AG04449 (cell line): ENCODE measurements at regions of chr6 and their contacts with region 1.

Region 1: GRCh38 chr6:31680840-31681671 is at the start of gene LY6G5C:
- DNase-seq: peak; percentile 64
- H3K4me3 ChIP-seq: peak within 1 kb of the TSS; percentile 58
- CTCF ChIP-seq: peak; percentile 78

Region 2: GRCh38 chr6:31479933-31480535 is 201.0 kb before region 1 on chr6:
- CTCF ChIA-PET with region 1: no interaction called
- POLR2A ChIA-PET with region 1: no interaction called
- DNase-seq: no peak
- H3K4me3 ChIP-seq: no peak overlapping the region
- CTCF ChIP-seq: no peak

Region 3: GRCh38 chr6:31615748-31616147 is 65.3 kb before region 1 on chr6:
- CTCF ChIA-PET with region 1: no interaction called
- POLR2A ChIA-PET with region 1: no interaction called
- DNase-seq: no peak
- H3K4me3 ChIP-seq: no peak overlapping the region
- CTCF ChIP-seq: no peak

Region 4: GRCh38 chr6:31739639-31740396 is 58.8 kb after region 1 on chr6 and contains the start of gene MSH5:
- CTCF ChIA-PET with region 1: interaction called, 12 read pairs
- POLR2A ChIA-PET with region 1: no interaction called
- DNase-seq: peak; percentile 91
- H3K4me3 ChIP-seq: peak within 1 kb of the TSS; percentile 95
- CTCF ChIP-seq: no peak

Region 5: DNA sequence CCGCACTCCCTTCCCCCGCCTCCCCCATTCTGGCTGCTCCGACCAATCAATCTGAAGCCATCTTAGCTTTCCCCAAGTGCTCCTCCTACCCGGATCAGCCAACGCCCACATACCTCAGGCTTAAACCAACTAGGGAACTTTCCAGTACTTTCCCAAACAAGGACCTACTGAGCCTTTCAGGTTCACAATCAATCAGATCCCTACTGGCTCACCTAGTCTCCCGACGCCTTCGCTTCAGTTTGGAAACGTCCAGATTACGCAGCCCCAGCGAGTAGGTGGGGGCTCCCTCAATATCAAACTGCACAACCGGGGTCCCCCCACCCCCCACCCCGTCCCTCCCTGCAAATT is 133.6 kb after region 1 on chr6:
- CTCF ChIA-PET with region 1: no interaction called
- POLR2A ChIA-PET with region 1: no interaction called
- DNase-seq: peak; percentile 92
- H3K4me3 ChIP-seq: peak overlapping the region; percentile 64
- CTCF ChIP-seq: no peak

Region 6: GRCh38 chr6:31862344-31863227 is 181.5 kb after region 1 on chr6 and contains the start of gene NEU1:
- CTCF ChIA-PET with region 1: interaction called, 22 read pairs
- POLR2A ChIA-PET with region 1: no interaction called
- DNase-seq: peak; percentile 99
- H3K4me3 ChIP-seq: peak within 1 kb of the TSS; percentile 94
- CTCF ChIP-seq: no peak

Region 7: DNA sequence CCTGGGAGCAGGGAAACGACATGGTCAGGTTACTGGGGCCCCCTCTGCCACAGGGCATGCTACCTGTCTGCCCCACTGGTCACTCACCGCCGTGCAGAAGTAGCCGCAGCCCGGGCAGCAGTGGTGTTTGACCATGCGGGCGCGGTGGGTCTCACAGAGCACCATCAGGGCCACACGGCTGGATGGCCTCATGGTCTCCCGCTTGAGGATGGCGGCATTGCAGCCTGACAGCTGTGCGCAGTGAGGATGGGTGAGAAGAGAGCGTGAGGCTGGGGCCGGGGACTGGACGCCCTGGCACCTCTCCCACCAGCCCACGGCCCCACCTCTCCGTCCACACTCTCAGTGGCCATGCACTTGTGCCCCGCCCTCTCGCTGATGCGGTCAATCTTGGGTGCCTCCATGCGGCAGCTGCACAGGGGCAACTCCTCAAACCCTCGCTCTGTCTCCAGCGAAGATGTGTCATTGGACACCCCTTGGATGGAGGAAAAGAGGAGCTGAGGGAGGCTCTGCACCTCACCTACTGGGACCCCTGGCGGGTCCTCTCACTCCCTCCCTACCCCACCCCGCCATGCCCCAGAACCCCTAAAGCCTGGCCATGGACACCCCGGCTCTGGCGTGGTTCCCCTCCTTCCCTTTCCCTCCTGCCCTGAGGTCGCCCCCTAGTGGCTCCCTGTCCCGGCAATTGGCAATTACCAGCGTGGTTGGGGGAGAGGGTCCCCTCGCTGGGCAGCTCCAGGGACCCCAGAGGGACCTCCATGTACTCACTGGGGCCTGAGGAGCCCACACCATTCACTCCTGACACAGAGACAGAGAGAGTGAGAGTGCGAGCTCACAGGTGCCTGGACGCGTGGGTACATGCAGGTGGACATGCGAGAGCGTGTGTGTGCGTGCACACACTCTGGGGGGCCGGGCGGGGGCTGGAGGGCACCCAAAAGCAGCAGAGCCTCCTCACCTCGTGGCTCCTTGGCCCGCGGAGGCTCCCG is 207.5 kb after region 1 on chr6:
- CTCF ChIA-PET with region 1: interaction called, 13 read pairs
- POLR2A ChIA-PET with region 1: no interaction called
- DNase-seq: no peak
- H3K4me3 ChIP-seq: no peak overlapping the region
- CTCF ChIP-seq: peak; percentile 83